ENCODE measurements at regions of chr1 and their contacts with region 1.

Region 1: DNA sequence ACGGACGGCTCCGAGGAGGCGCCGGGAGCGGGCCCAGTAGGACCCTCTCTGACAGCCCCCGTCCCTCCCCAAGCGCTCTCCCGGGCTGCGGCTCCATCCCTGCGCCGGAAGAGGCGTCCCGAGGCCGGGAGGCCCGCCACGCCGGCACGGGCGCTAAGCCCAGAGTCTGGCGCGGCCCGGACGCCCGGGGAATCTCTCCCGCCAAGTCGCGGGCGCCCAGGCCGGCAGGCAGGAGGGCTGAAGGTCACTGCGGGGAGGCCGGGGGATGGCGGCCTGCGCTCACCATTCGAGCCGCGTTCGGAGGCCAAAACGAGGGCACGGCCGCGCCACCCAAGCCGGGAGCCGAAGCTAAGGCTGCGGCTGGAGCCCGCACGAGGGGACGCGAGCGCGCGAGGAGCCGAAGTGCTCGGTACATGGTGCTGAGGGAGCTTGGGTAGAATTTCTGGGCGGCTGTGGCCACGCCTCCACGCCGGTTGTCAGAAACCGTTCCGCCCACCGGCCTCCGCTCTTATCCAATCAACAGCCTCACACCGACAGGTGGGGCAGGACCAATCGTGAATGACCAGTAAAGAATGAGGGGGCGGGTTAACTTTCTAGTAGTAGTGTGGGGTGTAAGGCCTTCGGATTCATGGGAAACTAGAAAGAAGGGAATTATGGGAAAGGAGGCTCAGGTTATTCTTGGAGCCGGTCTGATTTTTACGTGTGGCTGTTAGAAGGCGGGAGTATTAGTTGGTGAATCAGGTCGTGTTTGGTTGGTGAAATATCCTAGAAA is at the start of gene FH:
- DNase-seq: peak; percentile 97
- ATAC-seq: peak; percentile 99
- total RNA-seq, gene FH: 242 TPM

Region 2: DNA sequence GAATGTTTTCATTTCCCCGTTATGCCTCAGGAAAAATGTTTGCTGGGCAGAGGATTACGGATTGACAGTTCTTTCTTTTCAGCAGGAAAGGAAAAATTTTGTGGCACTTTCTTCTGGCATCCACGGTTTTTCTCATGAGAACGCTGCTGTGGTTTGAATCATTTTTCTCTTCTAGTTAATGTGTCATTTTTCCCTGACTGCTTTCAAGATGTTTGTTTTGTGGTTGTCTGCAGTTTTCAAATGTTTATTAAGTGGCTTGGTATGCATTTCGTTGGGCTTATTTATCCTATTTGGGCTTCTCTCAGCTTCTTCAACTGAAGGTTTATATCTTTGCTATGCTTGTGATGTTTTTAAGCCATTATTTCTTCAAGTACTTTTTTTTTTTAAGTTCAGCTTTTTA is 521.5 kb before region 1 on chr1:
- intact Hi-C with region 1: no loop called
- DNase-seq: no peak
- ATAC-seq: no peak

Region 3: DNA sequence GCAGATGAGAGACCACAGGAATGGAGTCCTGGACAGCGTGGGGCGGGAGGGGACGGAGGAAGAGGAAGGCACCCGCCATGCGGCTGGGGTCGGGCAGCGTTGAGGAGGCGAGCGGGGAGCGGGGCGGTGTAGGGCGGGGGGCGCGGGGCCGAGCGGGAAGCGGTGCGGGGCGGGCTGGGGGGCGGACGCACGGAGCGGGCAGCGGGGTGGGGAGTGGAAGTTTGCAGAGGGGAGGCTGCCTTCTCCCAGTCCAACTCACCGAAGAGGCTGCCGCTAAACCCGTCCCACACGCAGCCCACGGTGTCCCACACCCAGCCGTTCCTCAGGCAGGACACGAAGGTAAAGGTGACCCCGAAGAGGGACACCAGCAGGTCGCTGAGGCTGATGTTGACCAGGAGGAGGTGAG is 120.1 kb after region 1 on chr1:
- intact Hi-C with region 1: loop called (anchors 10 kb)
- DNase-seq: no peak
- ATAC-seq: peak; percentile 27

Region 4: DNA sequence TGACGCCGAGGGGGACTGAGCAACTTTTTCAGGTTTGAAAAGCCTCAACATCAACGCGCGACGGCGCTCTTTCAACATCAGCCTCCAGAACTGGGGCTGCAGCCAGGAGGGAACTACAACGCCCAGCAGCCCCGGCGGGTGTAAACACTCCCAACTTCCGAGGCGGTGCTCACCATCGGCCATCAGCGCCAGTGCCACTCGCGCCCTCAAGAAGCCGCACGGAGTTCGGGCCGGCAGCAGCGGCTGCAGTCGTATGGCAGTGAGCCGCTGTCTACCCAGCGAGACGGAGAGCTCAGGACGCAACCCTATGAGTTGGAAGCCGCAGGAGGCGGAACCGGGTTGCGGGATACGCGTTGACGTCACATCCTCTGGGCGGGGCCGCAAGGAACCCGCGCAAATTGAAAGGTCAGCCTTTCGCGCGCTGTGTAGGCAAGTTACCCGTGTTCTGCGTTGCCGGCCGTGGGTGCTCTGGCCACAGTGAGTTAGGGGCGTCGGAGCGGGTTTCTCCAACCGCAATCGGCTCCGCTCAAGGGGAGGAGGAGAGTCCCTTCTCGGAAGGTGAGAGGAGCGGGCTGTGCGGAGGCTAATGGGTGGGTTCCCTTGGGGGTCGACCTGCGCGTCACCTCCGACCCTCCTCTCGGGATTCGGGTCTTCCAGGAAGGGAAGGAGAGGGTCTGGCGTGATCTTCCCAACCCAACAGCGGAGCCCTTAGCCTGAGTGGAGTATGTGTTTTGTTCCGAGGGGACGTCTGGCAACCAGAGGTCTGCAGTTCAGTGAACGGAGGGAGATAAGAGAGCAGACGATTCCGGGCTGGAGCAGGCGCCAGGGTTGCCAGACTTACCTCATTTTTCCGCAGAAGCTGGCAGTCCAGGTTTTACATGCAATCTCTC is 328.5 kb after region 1 on chr1 and contains the start of gene EXO1:
- intact Hi-C with region 1: loop called (anchors 10 kb)
- DNase-seq: peak; percentile 90
- ATAC-seq: peak; percentile 99
- total RNA-seq, gene EXO1: 0.35 TPM